Right ventricle myocardium inferior (tissue), 1 donor: ENCODE measurements at regions of chr4 and their contacts with region 1.

Region 1: GRCh38 chr4:88591787-88592599 is at the start of gene HERC3:
- DNase-seq: peak; percentile 97
- ATAC-seq: peak; percentile 99
- total RNA-seq, gene HERC3: 49.5 TPM

Region 2: DNA sequence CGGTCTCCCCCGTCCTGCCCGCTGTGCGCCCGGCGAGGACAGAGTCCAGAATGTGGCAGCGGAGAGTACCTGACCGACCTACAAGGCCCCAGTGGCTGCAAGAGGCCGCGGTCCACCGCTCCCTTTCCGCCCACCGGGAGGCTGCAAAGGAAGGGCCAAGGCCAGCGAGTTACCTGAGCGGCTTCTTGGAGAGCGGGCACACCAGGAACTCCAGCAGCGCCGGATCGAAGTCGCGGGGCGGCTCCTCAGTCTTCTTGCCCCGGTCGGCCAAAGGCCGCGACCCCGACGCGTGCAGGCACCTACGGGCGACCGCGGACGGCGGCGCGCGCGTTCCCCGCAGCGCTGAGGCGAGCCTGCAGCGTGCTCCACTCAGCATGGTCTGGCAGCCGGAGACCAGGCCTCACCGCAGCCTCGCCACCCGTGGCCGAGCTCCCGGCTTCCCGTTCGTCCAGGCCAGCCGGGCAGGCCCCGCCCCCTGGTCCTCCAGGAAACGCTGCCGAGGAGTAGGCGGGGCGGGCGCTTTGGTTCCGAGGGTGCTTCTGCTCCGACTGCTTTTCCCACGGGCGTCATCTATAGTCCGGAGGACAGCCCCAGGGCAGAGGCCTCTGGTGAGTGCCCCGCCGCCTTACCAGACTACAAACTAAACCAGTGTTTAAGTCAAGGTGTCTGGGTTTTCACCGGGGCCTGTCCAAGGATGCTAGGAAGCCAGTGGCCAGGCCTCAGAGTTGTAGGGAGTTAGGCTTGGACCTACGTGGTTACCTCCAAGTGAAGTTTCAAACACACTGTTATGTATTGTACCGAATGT is 68.5 kb before region 1 on chr4 and contains the start of gene PYURF:
- intact Hi-C with region 1: loop called (anchors 5 kb)
- DNase-seq: peak; percentile 99
- ATAC-seq: peak; percentile 98
- total RNA-seq, gene PYURF: 56.3 TPM

Region 3: DNA sequence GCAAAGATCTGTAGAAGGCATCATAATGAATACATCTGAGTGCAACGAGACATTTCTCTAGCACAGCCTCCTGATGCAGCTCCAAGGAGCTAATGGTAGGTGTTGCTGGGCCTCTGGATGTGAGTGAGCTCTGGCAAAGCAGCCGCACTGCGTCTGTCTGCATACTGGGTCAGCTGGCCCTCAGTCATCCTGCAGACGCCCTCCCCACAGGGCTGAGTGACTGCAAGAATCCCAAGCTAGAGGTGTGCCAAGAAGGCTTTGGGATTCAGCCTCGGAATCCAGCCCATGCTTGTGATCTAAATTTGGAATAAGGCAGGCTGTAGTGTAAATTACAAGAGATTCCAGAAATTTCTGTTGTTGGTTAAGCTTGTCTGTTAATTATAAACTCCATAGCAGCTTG is 18.8 kb after region 1 on chr4:
- intact Hi-C with region 1: loop called (anchors 2 kb)
- DNase-seq: no peak
- ATAC-seq: peak; percentile 88

Region 4: GRCh38 chr4:88659055-88659889 is 67.3 kb after region 1 on chr4:
- intact Hi-C with region 1: loop called (anchors 2 kb)
- DNase-seq: no peak
- ATAC-seq: peak; percentile 92